Posterior vena cava (tissue), 2 donors: ENCODE measurements at regions of chr6 and their contacts with region 1.

Region 1: GRCh38 chr6:38404900-38405556 is 234.7 kb downstream of the BTBD9 start:
- DNase-seq: no peak

Region 2: GRCh38 chr6:38262609-38263008 is 142.4 kb before region 1 on chr6:
- intact Hi-C with region 1: loop called in 1 of 2 experiments (anchors 1 kb)
- DNase-seq: no peak